BJ (cell line): ENCODE measurements at regions of chr4 and their contacts with region 1.

Region 1: DNA sequence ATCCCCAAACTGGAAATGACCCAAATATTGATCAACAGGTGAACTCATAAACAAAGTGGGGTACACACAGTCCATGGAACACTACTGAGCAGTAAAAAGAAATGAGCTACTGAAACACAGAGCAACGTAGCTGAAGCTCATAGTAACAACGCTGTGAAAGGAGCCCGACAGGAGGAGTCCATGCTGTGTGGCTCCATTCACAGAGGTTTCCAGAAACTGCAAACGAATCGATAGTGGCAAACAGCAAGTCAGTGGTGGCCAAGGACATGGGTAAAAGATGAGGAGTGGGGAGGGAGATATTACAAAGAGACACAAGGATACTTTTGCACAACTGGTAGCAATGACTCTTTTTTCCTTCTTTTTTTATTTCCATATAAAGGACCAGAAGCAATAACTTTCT is 90.4 kb downstream of the HAUS3 start:
- DNase-seq: no peak
- H3K4me3 ChIP-seq: no peak overlapping the region
- H3K27me3 ChIP-seq: no peaks in the 10 kb centered on the region
- CTCF ChIP-seq: no peak

Region 2: DNA sequence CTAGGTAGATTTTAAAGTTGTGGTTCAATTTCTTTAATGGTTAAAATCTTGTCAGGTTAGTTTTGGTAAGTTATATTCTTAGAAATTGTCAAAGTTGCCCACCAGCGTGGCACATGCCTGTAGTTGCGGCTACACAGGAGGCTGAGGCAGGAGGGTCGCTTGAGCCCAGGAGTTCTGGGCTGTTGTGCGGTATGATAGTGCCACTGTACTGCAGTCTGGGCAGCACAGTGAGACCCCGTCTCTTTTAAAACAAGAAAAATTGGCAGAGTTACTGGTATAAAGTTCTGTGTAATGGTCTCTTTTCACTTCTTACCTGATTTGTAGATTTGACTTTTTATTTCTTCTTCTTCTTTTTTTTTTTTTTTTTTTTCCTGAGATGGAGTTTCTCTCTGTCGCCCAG is 449.3 kb after region 1 on chr4:
- CTCF ChIA-PET with region 1: no interaction called
- POLR2A ChIA-PET with region 1: interaction called, 13 read pairs
- DNase-seq: no peak
- H3K4me3 ChIP-seq: no peak overlapping the region
- H3K27me3 ChIP-seq: no peaks in the 10 kb centered on the region
- CTCF ChIP-seq: no peak